ENCODE measurements at regions of chr19 and their contacts with region 1.

Region 1: DNA sequence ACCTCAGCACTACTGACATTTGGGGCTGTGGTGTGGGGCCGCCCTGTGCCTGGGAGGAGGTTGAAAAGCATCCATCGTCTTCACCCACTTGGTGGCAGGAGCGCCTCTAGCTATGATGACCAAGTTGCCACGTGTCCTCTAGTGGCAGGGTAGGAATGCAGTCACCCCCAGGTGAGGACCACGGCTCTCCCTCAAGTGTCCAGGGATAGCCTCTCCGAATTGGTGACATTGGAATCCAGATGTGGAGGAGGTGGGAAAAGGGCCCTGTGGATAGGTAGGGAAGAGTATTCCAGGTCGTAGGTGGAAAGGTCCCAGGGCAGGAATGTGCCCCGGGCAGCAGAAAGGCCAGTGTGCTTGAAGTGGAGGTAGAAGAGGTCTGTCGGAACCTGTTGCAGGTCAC is 37.6 kb downstream of the ARHGEF18 start:
- DNase-seq: no peak
- H3K4me3 ChIP-seq: no peak overlapping the region
- H3K27ac ChIP-seq: no peak overlapping the region
- H3K4me1 ChIP-seq: peaks cover 0 to 9% (median 2%) of the 10 kb centered on the region in 3 donors
- H3K27me3 ChIP-seq: no peaks in the 10 kb centered on the region
- CTCF ChIP-seq: peak in 1 of 6 experiments; percentile 4
- POLR2A ChIP-seq: no peak

Region 2: DNA sequence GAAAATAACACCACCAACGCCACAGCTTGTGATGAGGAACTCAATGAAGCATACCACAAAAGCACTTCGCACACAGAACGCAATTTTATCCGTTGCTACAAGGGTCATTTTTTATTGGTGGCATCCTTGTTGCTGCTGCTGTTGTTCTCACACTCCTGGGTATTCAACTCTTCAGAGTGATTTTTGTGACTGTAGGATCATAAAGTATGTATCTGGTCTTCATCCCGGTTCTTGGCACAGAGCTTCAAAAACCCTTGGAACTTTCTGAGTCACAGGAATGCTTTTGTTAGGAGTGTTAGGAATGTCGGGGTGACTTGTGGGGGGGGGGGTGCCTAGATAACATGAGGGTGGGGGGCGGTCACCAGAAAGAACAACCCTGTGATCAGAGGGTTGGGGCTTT is 208.4 kb before region 1 on chr19:
- intact Hi-C with region 1: no loop called
- DNase-seq: no peak
- H3K4me3 ChIP-seq: no peak overlapping the region
- H3K27ac ChIP-seq: no peak overlapping the region
- H3K4me1 ChIP-seq: peaks cover 0 to 14% (median 9%) of the 10 kb centered on the region in 3 donors
- H3K27me3 ChIP-seq: no peaks in the 10 kb centered on the region
- CTCF ChIP-seq: no peak
- POLR2A ChIP-seq: no peak

Region 3: DNA sequence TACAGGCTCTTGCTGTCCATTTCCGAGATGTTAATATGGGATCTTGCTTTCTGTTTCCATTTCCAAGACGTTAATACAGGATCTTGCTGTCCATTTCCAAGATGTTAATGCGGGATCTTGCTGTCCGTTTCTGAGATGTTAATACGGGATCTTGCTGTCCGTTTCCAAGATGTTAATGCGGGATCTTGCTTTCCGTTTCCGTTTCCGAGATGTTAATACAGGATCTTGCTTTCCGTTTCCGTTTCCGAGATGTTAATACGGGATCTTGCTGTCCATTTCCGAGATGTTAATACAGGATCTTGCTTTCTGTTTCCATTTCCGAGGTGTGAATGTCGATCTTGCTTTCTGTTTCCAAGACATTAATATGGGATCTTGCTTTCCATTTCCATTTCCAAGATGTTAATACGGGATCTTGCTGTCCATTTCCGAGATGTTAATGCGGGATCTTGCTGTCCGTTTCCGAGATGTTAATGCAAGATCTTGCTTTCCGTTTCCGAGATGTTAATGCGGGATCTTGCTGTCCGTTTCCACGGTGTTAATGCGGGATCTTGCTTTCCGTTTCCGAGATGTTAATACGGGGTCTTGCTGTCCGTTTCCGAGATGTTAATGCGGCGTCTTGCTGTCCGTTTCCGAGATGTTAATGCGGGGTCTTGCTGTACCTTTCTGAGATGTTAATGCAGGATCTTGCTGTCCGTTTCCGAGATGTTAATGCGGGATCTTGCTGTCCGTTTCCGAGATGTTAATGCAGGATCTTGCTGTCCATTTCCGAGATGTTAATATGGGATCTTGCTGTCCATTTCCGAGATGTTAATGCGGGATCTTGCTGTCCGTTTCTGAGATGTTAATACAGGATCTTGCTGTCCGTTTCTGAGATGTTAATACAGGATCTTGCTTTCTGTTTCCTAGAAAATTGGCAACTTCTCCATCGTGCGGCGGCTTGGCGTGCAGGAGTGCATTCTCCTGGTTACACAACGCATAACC is 64.2 kb after region 1 on chr19:
- intact Hi-C with region 1: no loop called
- DNase-seq: no peak
- H3K4me3 ChIP-seq: no peak overlapping the region
- H3K27ac ChIP-seq: no peak overlapping the region
- H3K4me1 ChIP-seq: no peaks in the 10 kb centered on the region
- H3K27me3 ChIP-seq: no peaks in the 10 kb centered on the region
- CTCF ChIP-seq: no peak
- POLR2A ChIP-seq: no peak

Region 4: DNA sequence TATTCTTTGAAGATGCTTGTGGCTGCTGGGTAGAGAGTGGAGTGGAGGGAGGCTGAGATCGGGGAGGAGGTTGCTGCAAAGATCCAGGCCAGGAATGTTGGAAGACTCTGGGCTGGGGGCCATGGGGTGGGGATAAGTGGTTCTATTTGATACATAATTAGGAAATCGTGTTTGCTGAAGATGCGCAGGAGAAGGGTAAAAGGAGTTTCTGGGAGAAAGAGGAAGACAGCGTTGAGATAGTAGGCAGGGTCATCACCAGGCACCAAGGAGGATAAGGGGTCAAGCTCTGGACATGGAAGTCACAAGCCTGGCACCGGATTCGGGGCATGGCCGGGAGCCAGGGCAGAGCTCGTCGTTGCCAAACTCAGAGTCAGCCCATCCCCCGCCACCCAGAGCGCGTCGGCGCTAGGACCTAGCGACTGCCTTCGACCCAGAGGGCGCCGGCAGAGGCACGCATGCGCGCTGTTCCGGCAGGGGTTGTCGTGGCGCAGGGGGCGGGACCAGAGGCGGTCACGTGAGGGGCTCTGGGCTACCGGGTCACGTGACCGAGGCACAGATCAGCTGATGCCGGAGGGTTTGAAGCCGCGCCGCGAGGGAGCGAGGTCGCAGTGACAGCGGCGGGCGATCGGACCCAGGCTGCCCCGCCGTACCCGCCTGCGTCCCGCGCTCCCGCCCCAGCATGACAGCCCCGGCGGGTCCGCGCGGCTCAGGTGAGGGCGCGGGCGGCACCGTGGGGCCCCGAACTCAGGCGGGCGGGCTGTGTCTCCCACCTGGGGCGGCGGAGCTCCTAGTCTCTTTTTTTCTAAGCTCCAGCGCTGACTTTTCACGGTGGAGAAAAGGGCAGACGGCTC is 136.0 kb after region 1 on chr19 and contains the start of gene MCOLN1:
- intact Hi-C with region 1: loop called (anchors 10 kb)
- DNase-seq: peak; percentile 94
- H3K4me3 ChIP-seq: peak within 1 kb of the TSS; percentile 71 to 91 (median 84)
- H3K27ac ChIP-seq: peak within 1 kb of the TSS; percentile 73 to 86 (median 81)
- H3K4me1 ChIP-seq: peaks cover 19 to 41% (median 21%) of the 10 kb centered on the region in 3 donors
- H3K27me3 ChIP-seq: no peaks in the 10 kb centered on the region
- CTCF ChIP-seq: peak in 3 of 6 experiments; percentile 9 to 70 (median 24)
- POLR2A ChIP-seq: peak in 3 of 4 donors; percentile 67 to 84 (median 73)
- total RNA-seq, gene MCOLN1: 5.7 to 13.9 (median 7.8) TPM